Activated B cell treated with CpG ODN at 0.5 μM for 24 hours (primary cell): ENCODE measurements at regions of chr1 and their contacts with region 1.

Region 1: DNA sequence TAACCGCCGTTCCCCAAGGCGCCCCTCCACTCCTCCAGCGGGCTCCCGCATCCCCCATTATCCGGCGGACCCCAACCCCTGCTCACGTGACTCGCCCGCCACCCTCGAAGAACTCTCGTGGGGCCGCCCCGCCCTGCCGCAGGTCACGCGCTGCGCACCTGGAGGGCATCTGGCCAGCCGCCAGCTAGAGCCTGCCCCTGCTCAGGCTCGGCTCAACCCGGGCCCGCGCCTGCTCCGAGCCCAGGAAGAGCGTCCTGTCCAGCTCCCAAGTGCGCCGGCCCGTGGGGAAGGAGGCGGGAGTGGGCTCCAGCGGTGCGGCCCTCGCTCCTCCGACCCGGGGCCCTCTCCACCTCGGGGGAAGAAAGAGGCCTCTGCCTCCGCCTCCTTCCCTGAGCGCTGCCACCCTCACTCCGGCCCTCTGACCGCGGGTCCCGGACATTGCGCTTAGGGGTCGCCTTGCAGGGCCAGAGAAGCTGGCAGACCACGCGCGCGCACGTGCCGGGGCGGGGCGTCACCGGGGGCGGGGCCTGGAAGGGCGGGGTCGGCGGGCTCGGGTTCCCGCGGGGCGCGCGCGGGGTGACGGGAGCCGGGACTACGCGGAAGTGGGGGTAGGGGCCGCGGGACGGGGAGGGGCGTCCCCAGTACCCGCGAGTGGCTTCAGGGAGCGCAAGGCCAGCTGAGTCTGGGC is 28.4 kb downstream of the HMGN2 start:
- DNase-seq: peak; percentile 94
- ATAC-seq: peak; percentile 77
- H3K4me3 Mint-ChIP-seq: peak overlapping the region; percentile 90
- H3K27ac Mint-ChIP-seq: peak overlapping the region; percentile 93
- H3K4me1 Mint-ChIP-seq: peaks cover 8% of the 10 kb centered on the region
- H3K27me3 Mint-ChIP-seq: no peaks in the 10 kb centered on the region
- CTCF ChIP-seq: no peak

Region 2: GRCh38 chr1:25971066-25971810 is 529.4 kb before region 1 on chr1:
- CTCF ChIA-PET with region 1: no interaction called
- POLR2A ChIA-PET with region 1: no interaction called
- intact Hi-C with region 1: no loop called
- DNase-seq: no peak
- ATAC-seq: peak; percentile 82
- H3K4me3 Mint-ChIP-seq: peak overlapping the region; percentile 26
- H3K27ac Mint-ChIP-seq: peak overlapping the region; percentile 84
- H3K4me1 Mint-ChIP-seq: peaks cover 17% of the 10 kb centered on the region
- H3K27me3 Mint-ChIP-seq: no peaks in the 10 kb centered on the region
- CTCF ChIP-seq: no peak

Region 3: DNA sequence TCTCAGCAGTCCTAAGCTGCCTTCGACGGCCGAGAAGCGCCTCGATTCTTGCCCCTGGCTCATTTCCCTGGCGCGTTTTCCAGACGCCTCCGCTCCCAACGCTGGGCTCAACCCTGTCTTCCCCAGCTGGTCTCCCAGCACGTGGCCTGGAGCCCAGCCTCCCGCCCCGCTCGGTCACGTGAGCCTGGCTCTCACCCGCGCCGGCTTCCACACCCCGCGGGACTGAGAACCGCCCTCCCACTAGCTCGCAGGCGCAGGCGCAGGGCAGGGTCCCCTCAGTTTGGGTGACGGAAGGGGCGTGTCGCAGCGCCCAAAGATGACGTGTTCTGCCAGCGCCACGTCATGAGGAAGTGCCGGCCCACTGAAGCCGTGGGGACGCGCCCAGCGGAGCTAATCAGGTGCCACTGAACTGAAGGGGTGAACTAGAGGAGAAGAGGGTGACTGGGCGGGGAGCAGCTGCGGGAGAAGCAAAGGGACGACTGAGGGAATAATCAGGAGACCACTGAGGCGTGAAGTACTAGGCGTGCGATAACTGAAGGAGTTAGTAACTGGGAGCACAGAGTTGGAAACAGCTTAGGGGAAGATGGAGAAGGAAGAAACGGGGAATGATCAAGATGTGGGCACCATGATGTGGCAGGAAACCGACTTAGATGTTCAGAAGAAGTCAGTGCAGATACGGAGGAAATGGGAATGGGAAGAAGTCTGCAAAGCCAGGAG is 68.5 kb before region 1 on chr1 and contains the start of gene DHDDS:
- CTCF ChIA-PET with region 1: interaction called, 6 read pairs
- POLR2A ChIA-PET with region 1: interaction called, 20 read pairs
- intact Hi-C with region 1: loop called (anchors 2 kb)
- DNase-seq: peak; percentile 99
- ATAC-seq: peak; percentile 95
- H3K4me3 Mint-ChIP-seq: peak within 1 kb of the TSS; percentile 95
- H3K27ac Mint-ChIP-seq: peak within 1 kb of the TSS; percentile 94
- H3K4me1 Mint-ChIP-seq: peaks cover 23% of the 10 kb centered on the region
- H3K27me3 Mint-ChIP-seq: no peaks in the 10 kb centered on the region
- CTCF ChIP-seq: no peak
- total RNA-seq, gene DHDDS: 53.0 and 65.0 TPM in 2 replicates

Region 4: DNA sequence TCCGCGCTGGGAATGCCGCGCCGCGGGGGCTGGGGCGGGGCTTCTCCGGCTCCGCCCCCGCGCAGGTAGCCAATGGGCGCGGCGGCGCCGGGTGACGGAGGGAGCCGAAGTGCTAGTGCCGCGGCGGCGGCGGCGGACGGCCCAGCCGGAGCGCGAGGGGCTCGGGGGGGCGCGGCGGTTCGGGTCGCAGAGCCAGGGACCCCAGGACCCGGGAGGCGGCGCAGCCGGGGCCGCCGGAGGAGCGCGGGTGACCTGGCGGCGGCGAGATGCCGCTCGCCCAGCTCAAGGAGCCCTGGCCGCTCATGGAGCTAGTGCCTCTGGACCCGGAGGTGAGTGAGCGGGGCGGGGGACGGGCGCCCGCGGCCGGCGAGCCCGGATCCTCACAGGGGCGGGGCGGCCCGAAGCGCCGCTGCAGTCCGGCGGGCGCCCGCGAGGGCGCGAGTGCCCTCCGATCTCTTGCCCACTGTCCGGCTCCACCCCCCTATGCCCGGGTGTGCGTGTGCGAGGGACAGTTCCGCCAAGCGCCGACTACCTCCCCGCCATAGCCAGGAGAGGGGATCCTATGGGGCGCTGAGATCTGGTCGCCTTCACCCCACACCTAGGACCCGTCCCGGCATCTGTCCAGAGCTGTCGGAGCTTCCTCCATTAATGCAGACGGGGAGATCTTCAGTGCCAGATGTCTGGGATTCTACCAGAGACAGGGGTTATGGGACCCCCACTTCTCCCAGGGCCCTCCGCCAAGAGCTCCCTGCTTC is 29.2 kb after region 1 on chr1 and contains the start of gene RPS6KA1:
- CTCF ChIA-PET with region 1: interaction called, 15 read pairs
- POLR2A ChIA-PET with region 1: interaction called, 33 read pairs
- intact Hi-C with region 1: loop called (anchors 1 kb)
- DNase-seq: peak; percentile 72
- ATAC-seq: peak; percentile 95
- H3K4me3 Mint-ChIP-seq: peak within 1 kb of the TSS; percentile 90
- H3K27ac Mint-ChIP-seq: peak within 1 kb of the TSS; percentile 80
- H3K4me1 Mint-ChIP-seq: peaks cover 32% of the 10 kb centered on the region
- H3K27me3 Mint-ChIP-seq: peaks cover 1% of the 10 kb centered on the region
- CTCF ChIP-seq: no peak
- total RNA-seq, gene RPS6KA1: 139 and 150 TPM in 2 replicates

Region 5: DNA sequence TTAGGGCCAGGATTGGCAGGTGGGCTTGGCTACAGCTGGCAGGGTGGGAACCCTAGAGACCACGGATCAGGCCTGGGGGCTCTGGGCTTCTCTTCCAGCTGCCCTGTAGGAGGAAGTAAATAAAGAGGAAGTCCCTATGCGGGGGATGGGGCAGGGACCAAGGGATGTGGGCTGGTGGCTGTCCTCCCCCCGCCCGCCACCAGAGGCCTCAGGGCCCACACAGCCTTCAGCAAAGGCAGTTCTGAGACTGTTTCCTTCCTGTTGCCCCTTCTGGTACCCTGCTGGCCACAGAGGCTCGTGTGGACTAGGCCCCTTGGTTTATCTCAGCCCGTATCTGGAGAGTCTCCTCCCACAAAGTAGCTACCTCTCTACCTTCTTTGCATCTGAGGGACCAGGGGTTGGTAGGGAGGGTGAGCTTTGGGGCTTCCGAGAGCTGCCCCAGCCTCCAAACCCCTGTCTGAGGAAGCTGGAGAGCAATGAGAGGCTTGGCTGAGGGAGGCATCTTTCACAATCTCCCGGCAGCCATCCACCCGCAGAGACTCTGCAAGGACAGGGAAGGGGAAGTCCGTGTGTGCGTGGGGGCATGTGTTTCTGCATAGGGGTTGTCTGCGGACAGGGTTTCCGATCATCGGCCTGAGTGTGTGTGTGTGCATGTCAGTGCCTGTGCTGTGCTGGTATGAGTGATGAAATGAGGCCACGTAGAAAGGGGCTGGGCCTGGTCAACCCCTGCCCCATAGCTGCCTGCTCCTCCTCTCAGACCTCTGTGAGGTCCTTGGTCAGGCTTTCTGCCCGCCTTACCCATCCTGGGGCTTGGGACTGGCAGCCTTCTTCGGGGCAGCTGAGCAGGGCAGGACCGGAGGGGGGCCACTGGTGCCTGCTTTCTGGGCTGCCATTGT is 41.4 kb after region 1 on chr1:
- CTCF ChIA-PET with region 1: interaction called, 30 read pairs
- POLR2A ChIA-PET with region 1: interaction called, 115 read pairs
- intact Hi-C with region 1: loop called (anchors 1 kb)
- DNase-seq: peak; percentile 72
- ATAC-seq: peak; percentile 62
- H3K4me3 Mint-ChIP-seq: peak overlapping the region; percentile 82
- H3K27ac Mint-ChIP-seq: peak overlapping the region; percentile 99
- H3K4me1 Mint-ChIP-seq: peaks cover 93% of the 10 kb centered on the region
- H3K27me3 Mint-ChIP-seq: no peaks in the 10 kb centered on the region
- CTCF ChIP-seq: no peak

Region 6: DNA sequence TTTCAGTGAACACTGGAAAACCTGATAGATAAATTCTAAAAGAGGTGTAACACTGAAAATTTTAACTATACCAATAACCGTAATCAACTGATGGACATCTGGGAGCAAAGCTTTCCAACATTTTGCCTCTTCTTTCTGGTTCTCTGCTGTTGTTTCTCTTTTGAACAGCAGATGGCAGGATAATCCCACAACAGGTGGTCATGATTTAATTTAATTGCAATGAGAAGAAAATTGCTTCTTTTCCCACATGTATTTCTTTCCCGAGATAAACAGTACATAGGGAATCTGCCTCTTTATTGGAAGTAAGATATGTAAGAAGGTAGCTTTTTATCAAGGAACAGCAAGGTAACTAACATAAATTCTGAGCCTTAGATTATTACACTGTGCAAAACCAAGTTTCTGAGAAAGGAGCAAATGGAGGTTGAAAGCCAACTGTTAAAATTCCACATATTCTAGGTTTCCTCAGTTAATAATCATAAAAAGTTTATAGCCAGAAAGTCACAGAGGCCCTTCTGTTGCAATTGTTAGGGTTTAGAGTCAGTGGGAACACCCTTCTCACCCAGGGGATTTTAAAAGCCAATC is 101.8 kb after region 1 on chr1:
- CTCF ChIA-PET with region 1: interaction called, 14 read pairs
- POLR2A ChIA-PET with region 1: interaction called, 5 read pairs
- intact Hi-C with region 1: loop called (anchors 2 kb)
- DNase-seq: no peak
- ATAC-seq: peak; percentile 57
- H3K4me3 Mint-ChIP-seq: no peak overlapping the region
- H3K27ac Mint-ChIP-seq: no peak overlapping the region
- H3K4me1 Mint-ChIP-seq: peaks cover 3% of the 10 kb centered on the region
- H3K27me3 Mint-ChIP-seq: peaks cover 2% of the 10 kb centered on the region
- CTCF ChIP-seq: peak; percentile 83

Region 7: DNA sequence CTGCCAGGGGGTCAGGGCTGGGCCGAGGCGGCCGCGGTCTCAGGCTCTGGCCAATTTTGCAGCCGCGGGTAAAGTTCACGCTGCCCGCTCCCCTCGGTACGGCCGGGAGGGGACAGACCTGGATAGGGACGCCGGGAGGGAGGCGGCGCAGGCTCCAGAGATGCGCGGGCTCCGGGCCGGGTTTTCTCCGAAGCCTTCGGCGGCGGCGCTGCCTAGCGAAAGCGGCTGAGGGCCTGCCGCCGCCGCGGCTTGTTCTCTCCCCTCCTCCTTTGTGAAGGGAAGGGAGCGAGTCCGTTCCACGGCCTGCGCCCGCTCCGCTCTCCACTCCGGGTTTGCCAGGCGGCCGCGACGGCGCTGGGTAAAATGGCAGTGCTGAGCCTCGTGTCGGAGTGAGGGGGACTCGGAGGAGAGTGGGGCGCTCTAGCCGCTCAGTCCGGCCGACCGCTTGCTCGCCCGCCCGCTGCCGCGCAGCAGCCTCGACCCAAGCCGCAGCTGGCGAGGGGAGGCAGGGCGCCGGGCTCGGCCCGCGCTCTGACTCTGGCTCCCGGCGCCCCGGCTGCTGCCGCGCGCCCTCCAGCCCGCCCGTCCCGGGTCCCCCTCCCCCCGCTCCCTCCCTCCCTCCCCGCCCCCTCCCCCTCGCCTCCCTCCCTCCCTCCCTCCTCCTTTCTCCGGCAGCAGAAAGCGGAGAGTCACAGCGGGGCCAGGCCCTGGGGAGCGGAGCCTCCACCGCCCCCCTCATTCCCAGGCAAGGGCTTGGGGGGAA is 194.9 kb after region 1 on chr1 and contains the start of gene ARID1A:
- CTCF ChIA-PET with region 1: no interaction called
- POLR2A ChIA-PET with region 1: interaction called, 20 read pairs
- intact Hi-C with region 1: loop called (anchors 5 kb)
- DNase-seq: peak; percentile 96
- ATAC-seq: peak; percentile 62
- H3K4me3 Mint-ChIP-seq: peak within 1 kb of the TSS; percentile 92
- H3K27ac Mint-ChIP-seq: peak within 1 kb of the TSS; percentile 93
- H3K4me1 Mint-ChIP-seq: peaks cover 34% of the 10 kb centered on the region
- H3K27me3 Mint-ChIP-seq: no peaks in the 10 kb centered on the region
- CTCF ChIP-seq: no peak
- total RNA-seq, gene ARID1A: 116 and 142 TPM in 2 replicates

Region 8: GRCh38 chr1:26900001-26900814 is 399.6 kb after region 1 on chr1 and contains the start of gene GPATCH3:
- CTCF ChIA-PET with region 1: no interaction called
- POLR2A ChIA-PET with region 1: interaction called, 10 read pairs
- intact Hi-C with region 1: no loop called
- DNase-seq: peak; percentile 68
- ATAC-seq: peak; percentile 89
- H3K4me3 Mint-ChIP-seq: peak within 1 kb of the TSS; percentile 99
- H3K27ac Mint-ChIP-seq: peak within 1 kb of the TSS; percentile 100
- H3K4me1 Mint-ChIP-seq: peaks cover 32% of the 10 kb centered on the region
- H3K27me3 Mint-ChIP-seq: no peaks in the 10 kb centered on the region
- CTCF ChIP-seq: no peak
- total RNA-seq, gene GPATCH3: 24.0 and 26.0 TPM in 2 replicates